Dendritic cell treated with granulocyte-macrophage colony-stimulating factor and Interleukin-4, amounts not matched to agents 40 ng/mL and 50 ng/mL, for 4 days (primary cell): ENCODE measurements at regions of chr12 and their contacts with region 1.

Region 1: GRCh38 chr12:121678716-121679580 is 9.5 kb upstream of the MORN3 start:
- H3K4me3 Mint-ChIP-seq: no peak overlapping the region
- H3K27ac Mint-ChIP-seq: no peak overlapping the region
- H3K4me1 Mint-ChIP-seq: peaks cover 7% of the 10 kb centered on the region
- H3K27me3 Mint-ChIP-seq: no peaks in the 10 kb centered on the region

Region 2: GRCh38 chr12:121494093-121494787 is 184.7 kb before region 1 on chr12:
- intact Hi-C with region 1: loop called (anchors 2 kb)
- H3K4me3 Mint-ChIP-seq: no peak overlapping the region
- H3K27ac Mint-ChIP-seq: no peak overlapping the region
- H3K4me1 Mint-ChIP-seq: peaks cover 37% of the 10 kb centered on the region
- H3K27me3 Mint-ChIP-seq: no peaks in the 10 kb centered on the region